ENCODE measurements at regions of chr19 and their contacts with region 1.

Region 1: GRCh38 chr19:7705387-7706187 is 3.7 kb upstream of the FCER2 start:
- DNase-seq: peak; percentile 47 to 87 (median 79)
- ATAC-seq: peak; percentile 95
- H3K4me3 ChIP-seq: peak overlapping the region; percentile 34
- H3K4me3 Mint-ChIP-seq: peak overlapping the region; percentile 75 to 91 (median 83)
- H3K27ac ChIP-seq: peak overlapping the region; percentile 79
- H3K27ac Mint-ChIP-seq: peak overlapping the region; percentile 88 to 100 (median 97)
- H3K4me1 ChIP-seq: peaks cover 22 to 38% of the 10 kb centered on the region in 2 donors
- H3K4me1 Mint-ChIP-seq: peaks cover 27 to 71% (median 54%) of the 10 kb centered on the region in 7 donors
- H3K27me3 ChIP-seq: no peaks in the 10 kb centered on the region
- H3K27me3 Mint-ChIP-seq: peaks cover 0 to 20% (median 0%) of the 10 kb centered on the region in 5 donors

Region 2: GRCh38 chr19:7670150-7670783 is 35.3 kb before region 1 on chr19:
- CTCF ChIA-PET with region 1: no interaction called
- POLR2A ChIA-PET with region 1: no interaction called
- intact Hi-C with region 1: no loop called
- DNase-seq: peak in 1 of 9 donors; percentile 31
- ATAC-seq: peak; percentile 65
- H3K4me3 ChIP-seq: peak overlapping the region; percentile 17
- H3K4me3 Mint-ChIP-seq: peak overlapping the region; percentile 63 to 85 (median 75)
- H3K27ac ChIP-seq: no peak overlapping the region
- H3K27ac Mint-ChIP-seq: peak overlapping the region in 3 of 9 donors; percentile 43 to 77 (median 54)
- H3K4me1 ChIP-seq: no peaks in the 10 kb centered on the region
- H3K4me1 Mint-ChIP-seq: peaks cover 11 to 19% (median 13%) of the 10 kb centered on the region in 7 donors
- H3K27me3 ChIP-seq: no peaks in the 10 kb centered on the region
- H3K27me3 Mint-ChIP-seq: peaks cover 17 to 41% (median 24%) of the 10 kb centered on the region in 5 donors

Region 3: GRCh38 chr19:7718668-7719067 is 13.1 kb after region 1 on chr19:
- CTCF ChIA-PET with region 1: no interaction called
- POLR2A ChIA-PET with region 1: interaction called, 7 read pairs
- intact Hi-C with region 1: loop called in 1 of 2 experiments (anchors 2 kb)
- DNase-seq: peak in 1 of 9 donors; percentile 22
- ATAC-seq: peak; percentile 49
- H3K4me3 ChIP-seq: no peak overlapping the region
- H3K4me3 Mint-ChIP-seq: peak overlapping the region in 7 of 10 donors; percentile 17 to 58 (median 42)
- H3K27ac ChIP-seq: no peak overlapping the region
- H3K27ac Mint-ChIP-seq: peak overlapping the region in 4 of 9 donors; percentile 40 to 77 (median 70)
- H3K4me1 ChIP-seq: peaks cover 7% of the 10 kb centered on the region in 2 donors
- H3K4me1 Mint-ChIP-seq: peaks cover 0 to 21% (median 11%) of the 10 kb centered on the region in 7 donors
- H3K27me3 ChIP-seq: no peaks in the 10 kb centered on the region
- H3K27me3 Mint-ChIP-seq: no peaks in the 10 kb centered on the region

Region 4: DNA sequence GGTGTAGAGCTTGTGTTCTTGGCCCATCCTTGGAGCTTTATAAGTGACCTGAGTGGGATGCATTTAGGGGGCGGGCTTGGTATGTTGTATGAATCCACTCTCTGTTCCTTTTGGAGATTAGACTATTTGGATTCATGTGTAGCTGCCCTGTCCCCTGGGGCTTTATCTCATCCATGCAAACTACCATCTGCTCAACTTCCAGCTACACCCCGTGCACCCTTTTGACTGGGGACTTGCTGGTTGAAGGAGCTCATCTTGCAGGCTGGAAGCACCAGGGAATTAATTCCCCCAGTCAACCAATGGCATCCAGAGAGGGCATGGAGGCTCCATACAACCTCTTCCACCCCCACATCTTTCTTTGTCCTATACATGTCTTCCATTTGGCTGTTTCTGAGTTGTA is 63.6 kb after region 1 on chr19:
- CTCF ChIA-PET with region 1: no interaction called
- POLR2A ChIA-PET with region 1: no interaction called
- intact Hi-C with region 1: no loop called
- DNase-seq: no peak
- ATAC-seq: no peak
- H3K4me3 ChIP-seq: no peak overlapping the region
- H3K4me3 Mint-ChIP-seq: no peak overlapping the region
- H3K27ac ChIP-seq: no peak overlapping the region
- H3K27ac Mint-ChIP-seq: no peak overlapping the region
- H3K4me1 ChIP-seq: peaks cover 9 to 11% of the 10 kb centered on the region in 2 donors
- H3K4me1 Mint-ChIP-seq: peaks cover 10 to 26% (median 17%) of the 10 kb centered on the region in 7 donors
- H3K27me3 ChIP-seq: no peaks in the 10 kb centered on the region
- H3K27me3 Mint-ChIP-seq: peaks cover 0 to 7% (median 0%) of the 10 kb centered on the region in 5 donors

Region 5: DNA sequence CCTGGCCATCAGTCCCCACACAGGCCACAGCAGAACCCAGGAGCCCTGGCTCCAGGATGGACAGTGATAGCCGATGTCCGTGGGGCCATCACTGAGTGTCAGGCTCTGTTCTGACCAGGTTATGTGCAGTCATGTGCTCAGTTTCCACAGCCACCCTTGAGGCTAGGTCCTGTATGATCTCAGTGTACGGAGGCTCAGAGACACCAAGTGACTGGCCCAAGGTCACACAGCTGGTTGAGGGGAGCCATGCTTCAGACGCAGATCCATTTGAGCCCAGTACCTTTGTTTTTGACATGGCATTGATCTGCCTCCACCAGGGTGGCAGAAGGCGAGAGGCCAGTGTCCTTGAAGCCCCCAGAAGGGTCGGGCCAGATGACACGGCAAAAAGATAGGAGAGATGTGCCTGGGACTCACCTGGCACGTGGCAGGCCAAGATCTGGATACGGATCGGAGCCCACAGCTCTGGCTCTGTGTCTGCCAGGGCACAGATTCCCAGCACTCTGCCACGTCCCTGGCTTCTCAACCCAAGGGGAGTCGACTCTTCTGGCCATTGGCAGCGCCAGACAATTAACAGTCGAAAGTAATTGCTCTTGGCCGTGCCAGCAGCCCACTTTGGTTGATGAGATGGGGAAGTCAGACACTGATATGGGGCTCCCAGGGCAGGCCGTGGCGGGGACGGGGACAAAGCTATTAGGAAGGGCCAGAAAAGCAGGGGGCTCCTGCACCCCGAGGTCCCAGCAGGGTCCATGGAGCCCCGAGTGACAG is 140.0 kb after region 1 on chr19:
- CTCF ChIA-PET with region 1: no interaction called
- POLR2A ChIA-PET with region 1: no interaction called
- intact Hi-C with region 1: no loop called
- DNase-seq: no peak
- ATAC-seq: no peak
- H3K4me3 ChIP-seq: no peak overlapping the region
- H3K4me3 Mint-ChIP-seq: no peak overlapping the region
- H3K27ac ChIP-seq: no peak overlapping the region
- H3K27ac Mint-ChIP-seq: peak overlapping the region in 1 of 9 donors; percentile 41
- H3K4me1 ChIP-seq: no peaks in the 10 kb centered on the region
- H3K4me1 Mint-ChIP-seq: peaks cover 0 to 3% (median 0%) of the 10 kb centered on the region in 7 donors
- H3K27me3 ChIP-seq: no peaks in the 10 kb centered on the region
- H3K27me3 Mint-ChIP-seq: no peaks in the 10 kb centered on the region